T-cell (primary cell): ENCODE measurements at regions of chr3 and their contacts with region 1.

Region 1: GRCh38 chr3:102699819-102700140 is 265.0 kb downstream of the ZPLD1 start:
- DNase-seq: no peak
- ATAC-seq: no peak
- H3K4me3 ChIP-seq: no peak overlapping the region
- H3K4me3 Mint-ChIP-seq: no peak overlapping the region
- H3K27ac ChIP-seq: no peak overlapping the region
- H3K27ac Mint-ChIP-seq: no peak overlapping the region
- H3K4me1 ChIP-seq: no peaks in the 10 kb centered on the region
- H3K4me1 Mint-ChIP-seq: no peaks in the 10 kb centered on the region
- H3K27me3 ChIP-seq: no peaks in the 10 kb centered on the region
- H3K27me3 Mint-ChIP-seq: peaks cover 0 to 9% of the 10 kb centered on the region in 2 donors

Region 2: DNA sequence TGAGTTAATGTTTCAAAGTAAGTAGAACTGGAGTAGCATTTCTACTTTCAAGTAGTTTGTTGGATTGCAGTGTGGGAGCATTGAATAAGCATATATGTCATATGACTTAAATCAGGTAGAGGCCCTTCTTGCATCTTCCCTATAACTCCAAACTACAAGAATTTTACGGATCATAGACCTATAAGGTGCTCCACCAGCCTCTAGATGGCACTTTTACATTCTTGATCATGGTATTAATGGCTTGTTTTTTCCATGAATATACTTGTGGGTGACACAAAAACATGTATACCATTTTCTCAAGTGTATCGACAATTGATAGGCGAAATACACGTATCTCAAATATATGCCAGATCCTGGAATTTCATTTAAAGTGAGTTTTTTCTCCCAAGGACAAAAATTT is 46.1 kb after region 1 on chr3:
- CTCF ChIA-PET with region 1: no interaction called
- POLR2A ChIA-PET with region 1: interaction called in 1 of 2 experiments, 13 read pairs
- DNase-seq: no peak
- ATAC-seq: no peak
- H3K4me3 ChIP-seq: no peak overlapping the region
- H3K4me3 Mint-ChIP-seq: no peak overlapping the region
- H3K27ac ChIP-seq: no peak overlapping the region
- H3K27ac Mint-ChIP-seq: no peak overlapping the region
- H3K4me1 ChIP-seq: no peaks in the 10 kb centered on the region
- H3K4me1 Mint-ChIP-seq: no peaks in the 10 kb centered on the region
- H3K27me3 ChIP-seq: no peaks in the 10 kb centered on the region
- H3K27me3 Mint-ChIP-seq: peaks cover 0 to 7% of the 10 kb centered on the region in 2 donors